Activated T-helper 1 cell treated with anti-CD3 and anti-CD28 coated beads, Interleukin-12 subunit alpha, Interleukin-12 subunit beta, Interleukin-2, Interleukin-4 antibody, amounts not matched to agents 30 ng/mL and 10 ng/mL and 1 ng/mL, durations not matched to agents 14 hours and 24 hours and 36 hours (primary cell): ENCODE measurements at regions of chr10 and their contacts with region 1.

Region 1: GRCh38 chr10:91453535-91453934 is 43.4 kb downstream of the HECTD2 start:
- DNase-seq: no peak
- H3K4me3 Mint-ChIP-seq: no peak overlapping the region
- H3K27ac Mint-ChIP-seq: no peak overlapping the region
- H3K4me1 Mint-ChIP-seq: no peaks in the 10 kb centered on the region
- H3K27me3 Mint-ChIP-seq: no peaks in the 10 kb centered on the region

Region 2: GRCh38 chr10:90579602-90580242 is 873.8 kb before region 1 on chr10:
- intact Hi-C with region 1: no loop called
- DNase-seq: no peak
- H3K4me3 Mint-ChIP-seq: no peak overlapping the region
- H3K27ac Mint-ChIP-seq: no peak overlapping the region
- H3K4me1 Mint-ChIP-seq: no peaks in the 10 kb centered on the region
- H3K27me3 Mint-ChIP-seq: no peaks in the 10 kb centered on the region

Region 3: DNA sequence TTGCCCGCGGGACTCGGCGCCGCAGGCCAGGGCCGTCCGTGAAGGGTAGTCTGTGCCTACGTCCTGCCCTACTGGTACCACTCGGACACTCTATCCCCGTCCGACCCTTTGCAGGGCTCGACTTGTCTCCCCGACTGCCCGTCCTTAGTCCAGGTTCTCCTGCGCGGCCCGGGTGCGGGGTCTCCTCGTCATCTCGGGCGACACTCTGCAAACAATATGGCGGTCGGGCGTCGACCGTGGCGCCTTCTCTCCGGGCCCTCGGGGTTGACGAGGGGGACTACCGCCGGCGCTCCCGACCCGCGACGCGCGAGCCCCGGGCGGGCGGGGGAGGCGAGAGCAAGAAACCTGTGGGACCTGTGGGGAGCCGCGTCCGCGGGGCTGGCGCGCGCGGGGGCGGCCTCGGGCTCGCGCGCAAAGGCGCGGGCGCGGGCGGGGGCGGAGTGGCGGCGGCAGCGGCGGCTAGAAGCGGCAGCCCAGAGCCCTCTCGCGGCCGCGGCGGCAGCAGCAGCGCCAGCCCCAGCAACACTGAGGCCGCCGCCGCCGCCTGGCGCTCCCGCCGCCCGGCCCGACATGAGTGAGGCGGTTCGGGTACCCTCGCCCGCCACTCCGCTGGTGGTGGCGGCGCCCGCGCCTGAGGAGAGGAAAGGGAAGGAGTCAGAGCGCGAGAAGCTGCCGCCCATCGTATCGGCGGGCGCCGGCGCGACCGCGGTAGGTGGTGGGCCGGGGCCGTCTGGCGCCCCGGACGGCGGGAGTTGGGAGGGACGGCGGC is 43.5 kb before region 1 on chr10 and contains the start of gene HECTD2:
- intact Hi-C with region 1: no loop called
- DNase-seq: peak; percentile 75
- H3K4me3 Mint-ChIP-seq: peak within 1 kb of the TSS; percentile 91
- H3K27ac Mint-ChIP-seq: peak within 1 kb of the TSS; percentile 95
- H3K4me1 Mint-ChIP-seq: peaks cover 25% of the 10 kb centered on the region
- H3K27me3 Mint-ChIP-seq: peaks cover 11% of the 10 kb centered on the region
- total RNA-seq, gene HECTD2: 6.2 and 6.4 TPM in 2 replicates

Region 4: DNA sequence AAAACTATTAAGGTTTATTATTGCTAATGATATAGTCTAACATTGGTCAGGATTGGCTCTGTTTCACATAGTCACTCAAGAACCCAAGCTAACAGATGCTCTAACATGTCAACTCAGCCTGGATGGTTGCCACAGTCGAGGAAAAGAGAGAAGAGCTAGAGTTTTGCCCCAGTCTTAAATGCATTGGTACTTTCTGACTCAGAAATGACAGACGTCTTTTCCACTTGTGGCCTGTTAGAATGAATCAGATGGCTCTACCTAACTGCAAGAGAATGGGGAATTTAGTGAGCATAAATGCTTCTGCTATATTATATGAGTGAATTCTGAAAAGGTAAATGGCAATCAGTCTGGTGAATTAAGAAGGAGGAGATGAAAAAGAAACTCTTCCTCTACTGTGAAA is 29.5 kb before region 1 on chr10:
- intact Hi-C with region 1: loop called (anchors 1 kb)
- DNase-seq: no peak
- H3K4me3 Mint-ChIP-seq: no peak overlapping the region
- H3K27ac Mint-ChIP-seq: peak overlapping the region; percentile 4
- H3K4me1 Mint-ChIP-seq: peaks cover 23% of the 10 kb centered on the region
- H3K27me3 Mint-ChIP-seq: no peaks in the 10 kb centered on the region